MCF 10A (cell line): ENCODE measurements at regions of chr13 and their contacts with region 1.

Region 1: GRCh38 chr13:37869756-37870488 is at the start of gene TRPC4:
- DNase-seq: peak; percentile 78
- H3K4me3 Mint-ChIP-seq: peak within 1 kb of the TSS; percentile 71
- H3K27ac Mint-ChIP-seq: no peak within 1 kb of the TSS
- H3K4me1 Mint-ChIP-seq: peaks cover 12% of the 10 kb centered on the region
- H3K27me3 Mint-ChIP-seq: peaks cover 12% of the 10 kb centered on the region
- CTCF ChIP-seq: peak; percentile 67
- total RNA-seq, gene TRPC4: not detected in 2 replicates

Region 2: DNA sequence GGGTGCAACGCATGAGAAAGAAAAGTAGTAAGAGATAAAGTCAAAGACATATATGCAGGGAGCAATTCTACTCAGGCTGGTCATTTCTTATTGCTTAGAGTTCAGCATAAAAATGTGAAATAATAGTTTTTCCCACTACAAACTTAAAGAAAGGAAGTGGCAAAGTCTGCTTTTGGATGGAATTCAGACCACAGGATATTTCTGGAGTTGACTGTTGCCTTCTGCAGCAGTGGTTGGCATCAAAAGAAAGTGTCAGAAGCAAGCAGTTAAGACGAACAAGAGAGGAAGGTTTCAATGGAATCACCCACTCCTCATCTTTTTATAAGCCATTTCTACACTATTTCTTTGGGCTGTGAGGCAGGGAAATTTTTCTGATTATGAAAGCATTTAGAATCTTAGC is 35.8 kb after region 1 on chr13:
- CTCF ChIA-PET with region 1: no interaction called
- POLR2A ChIA-PET with region 1: no interaction called
- intact Hi-C with region 1: no loop called
- DNase-seq: no peak
- H3K4me3 Mint-ChIP-seq: no peak overlapping the region
- H3K27ac Mint-ChIP-seq: no peak overlapping the region
- H3K4me1 Mint-ChIP-seq: no peaks in the 10 kb centered on the region
- H3K27me3 Mint-ChIP-seq: no peaks in the 10 kb centered on the region
- CTCF ChIP-seq: no peak

Region 3: DNA sequence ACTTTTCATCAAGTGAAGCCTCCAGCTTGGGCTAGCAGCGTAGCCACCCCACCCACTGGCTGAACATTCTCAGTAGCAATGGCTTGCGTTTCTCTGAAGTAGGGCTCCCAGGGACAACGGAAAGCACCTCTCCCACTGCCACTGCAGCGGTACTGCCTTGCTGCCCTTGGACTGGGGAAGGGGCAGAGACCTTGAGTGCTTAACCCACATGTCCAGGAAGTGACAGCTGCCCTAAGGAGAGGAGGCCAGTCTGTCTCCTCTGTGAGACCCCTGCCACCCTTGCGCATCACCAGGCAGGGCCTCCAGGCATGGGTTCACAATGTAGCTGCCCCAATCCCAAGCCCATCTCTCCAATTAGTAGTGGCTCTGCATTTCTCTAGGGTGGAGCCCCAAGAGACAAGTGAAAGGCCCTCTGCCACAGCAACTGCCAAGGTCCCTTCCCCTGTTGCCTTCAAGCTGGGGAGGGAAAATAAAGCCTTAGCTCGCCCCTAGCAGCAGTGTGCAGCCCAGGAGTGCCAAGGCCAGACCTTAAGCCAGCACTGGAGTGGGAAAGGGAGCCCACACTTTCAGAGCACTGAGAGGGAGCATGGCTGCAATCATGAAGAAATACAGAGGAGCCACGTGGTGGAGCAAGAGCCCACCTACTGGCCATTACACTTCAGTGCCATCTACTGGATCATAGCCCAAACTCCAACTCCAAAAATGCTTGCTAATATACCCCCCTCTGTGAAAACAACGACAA is 175.6 kb after region 1 on chr13:
- CTCF ChIA-PET with region 1: interaction called, 12 read pairs
- POLR2A ChIA-PET with region 1: no interaction called
- intact Hi-C with region 1: loop called (anchors 1 kb)
- DNase-seq: peak; percentile 56
- H3K4me3 Mint-ChIP-seq: no peak overlapping the region
- H3K27ac Mint-ChIP-seq: peak overlapping the region; percentile 44
- H3K4me1 Mint-ChIP-seq: no peaks in the 10 kb centered on the region
- H3K27me3 Mint-ChIP-seq: no peaks in the 10 kb centered on the region
- CTCF ChIP-seq: peak; percentile 45

Region 4: DNA sequence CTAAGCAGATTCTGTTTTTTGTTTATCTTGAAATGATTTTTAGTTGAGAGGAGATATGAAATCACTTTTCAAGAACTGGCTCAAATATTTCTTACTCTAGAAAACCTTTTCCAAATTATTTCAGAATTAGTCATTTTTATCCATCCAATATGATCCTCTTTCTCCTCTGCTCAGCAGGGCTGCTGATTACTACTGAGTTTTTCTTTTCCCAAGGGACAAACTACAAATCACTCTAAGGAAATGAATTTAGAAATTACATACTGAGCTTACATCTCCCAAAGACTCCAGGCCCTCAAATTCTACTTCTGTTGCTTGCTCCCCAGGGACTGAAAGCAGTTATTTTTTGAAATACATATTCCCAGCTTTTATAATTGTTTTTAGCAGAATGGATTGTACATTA is 392.3 kb after region 1 on chr13:
- CTCF ChIA-PET with region 1: no interaction called
- POLR2A ChIA-PET with region 1: no interaction called
- intact Hi-C with region 1: no loop called
- DNase-seq: peak; percentile 2
- H3K4me3 Mint-ChIP-seq: no peak overlapping the region
- H3K27ac Mint-ChIP-seq: no peak overlapping the region
- H3K4me1 Mint-ChIP-seq: no peaks in the 10 kb centered on the region
- H3K27me3 Mint-ChIP-seq: no peaks in the 10 kb centered on the region
- CTCF ChIP-seq: no peak

Region 5: GRCh38 chr13:38349390-38350113 is 479.6 kb after region 1 on chr13 and contains the start of gene UFM1:
- CTCF ChIA-PET with region 1: interaction called, 3 read pairs
- POLR2A ChIA-PET with region 1: no interaction called
- intact Hi-C with region 1: loop called (anchors 5 kb)
- DNase-seq: peak; percentile 95
- H3K4me3 Mint-ChIP-seq: peak within 1 kb of the TSS; percentile 94
- H3K27ac Mint-ChIP-seq: peak within 1 kb of the TSS; percentile 99
- H3K4me1 Mint-ChIP-seq: peaks cover 35% of the 10 kb centered on the region
- H3K27me3 Mint-ChIP-seq: no peaks in the 10 kb centered on the region
- CTCF ChIP-seq: no peak
- total RNA-seq, gene UFM1: 129 and 173 TPM in 2 replicates

Region 6: DNA sequence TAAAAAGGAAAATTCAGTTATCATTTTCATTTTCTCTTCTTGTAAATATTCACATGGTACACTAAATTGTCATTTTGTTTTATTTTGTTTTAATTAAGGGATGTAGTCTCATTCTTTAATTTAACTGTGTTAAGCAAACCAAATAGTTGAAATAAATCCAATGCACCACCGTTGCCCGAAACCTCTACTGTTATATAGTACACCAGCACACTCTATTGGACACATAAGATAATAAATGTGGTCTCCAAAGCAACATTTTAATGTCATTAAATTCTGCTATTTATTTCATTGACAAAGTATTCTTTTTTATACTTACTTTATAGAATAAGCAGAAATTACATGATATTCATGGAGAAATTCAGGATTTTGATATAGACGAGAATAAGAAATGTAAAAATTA is 660.6 kb after region 1 on chr13:
- CTCF ChIA-PET with region 1: interaction called, 30 read pairs
- POLR2A ChIA-PET with region 1: interaction called, 3 read pairs
- intact Hi-C with region 1: loop called (anchors 1 kb)
- DNase-seq: peak; percentile 33
- H3K4me3 Mint-ChIP-seq: no peak overlapping the region
- H3K27ac Mint-ChIP-seq: no peak overlapping the region
- H3K4me1 Mint-ChIP-seq: no peaks in the 10 kb centered on the region
- H3K27me3 Mint-ChIP-seq: peaks cover 29% of the 10 kb centered on the region
- CTCF ChIP-seq: peak; percentile 42

Region 7: DNA sequence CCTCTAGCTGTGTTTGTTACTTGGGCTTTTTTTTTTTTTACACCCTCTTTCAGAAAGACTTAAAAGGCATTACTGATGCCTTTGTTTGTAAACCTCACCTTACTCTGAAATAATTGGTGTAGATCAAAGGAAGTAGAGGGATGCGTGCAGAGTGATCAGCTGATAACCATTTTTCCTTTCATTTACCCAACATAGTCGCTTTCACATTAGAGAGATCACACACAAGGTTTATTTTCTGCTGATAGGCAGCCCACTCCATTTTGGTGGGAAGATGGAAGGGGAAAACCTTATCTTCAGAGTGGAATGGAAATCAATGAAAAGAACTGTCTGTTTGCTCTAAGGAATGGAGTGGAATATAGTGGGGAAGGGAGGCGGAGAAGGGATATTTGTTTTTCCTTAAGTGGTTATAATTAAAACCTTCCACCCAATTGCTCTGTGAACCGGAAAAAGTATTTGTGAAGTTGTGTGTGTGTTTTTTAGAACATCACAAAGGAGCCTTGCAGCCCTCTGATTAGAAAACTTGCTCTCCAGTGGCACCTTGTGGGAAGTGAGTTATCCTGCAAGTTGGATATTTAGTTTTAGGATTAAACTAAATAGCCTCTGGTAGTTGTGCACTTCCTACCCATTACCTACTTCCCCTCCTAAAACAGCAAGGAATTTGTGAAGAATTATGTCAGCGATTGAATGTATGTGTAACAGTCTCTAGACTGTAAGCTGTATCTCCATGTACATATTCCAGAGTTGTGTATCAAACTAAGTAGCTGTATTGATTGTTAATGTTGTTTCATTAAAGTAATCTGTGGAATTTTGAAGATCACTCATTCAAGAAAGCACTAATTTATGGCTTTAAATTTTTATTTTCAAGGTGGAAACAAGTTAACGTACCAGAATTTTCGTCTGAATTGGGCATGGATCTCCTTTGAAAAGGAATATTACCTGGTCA is 893.8 kb after region 1 on chr13:
- CTCF ChIA-PET with region 1: no interaction called
- POLR2A ChIA-PET with region 1: no interaction called
- intact Hi-C with region 1: loop called (anchors 10 kb)
- DNase-seq: peak; percentile 58
- H3K4me3 Mint-ChIP-seq: no peak overlapping the region
- H3K27ac Mint-ChIP-seq: no peak overlapping the region
- H3K4me1 Mint-ChIP-seq: no peaks in the 10 kb centered on the region
- H3K27me3 Mint-ChIP-seq: peaks cover 29% of the 10 kb centered on the region
- CTCF ChIP-seq: peak; percentile 53